ENCODE measurements at regions of chr6 and their contacts with region 1.

Region 1: GRCh38 chr6:26596579-26597388 is at the start of gene ABT1:
- DNase-seq: peak; percentile 98
- H3K4me3 ChIP-seq: peak within 1 kb of the TSS; percentile 61 to 99 (median 89)
- H3K27ac ChIP-seq: peak within 1 kb of the TSS; percentile 68
- H3K4me1 ChIP-seq: peaks cover 19% of the 10 kb centered on the region
- H3K27me3 ChIP-seq: no peaks in the 10 kb centered on the region
- CTCF ChIP-seq: no peak
- total RNA-seq, gene ABT1: 14.2 to 15.9 TPM

Region 2: DNA sequence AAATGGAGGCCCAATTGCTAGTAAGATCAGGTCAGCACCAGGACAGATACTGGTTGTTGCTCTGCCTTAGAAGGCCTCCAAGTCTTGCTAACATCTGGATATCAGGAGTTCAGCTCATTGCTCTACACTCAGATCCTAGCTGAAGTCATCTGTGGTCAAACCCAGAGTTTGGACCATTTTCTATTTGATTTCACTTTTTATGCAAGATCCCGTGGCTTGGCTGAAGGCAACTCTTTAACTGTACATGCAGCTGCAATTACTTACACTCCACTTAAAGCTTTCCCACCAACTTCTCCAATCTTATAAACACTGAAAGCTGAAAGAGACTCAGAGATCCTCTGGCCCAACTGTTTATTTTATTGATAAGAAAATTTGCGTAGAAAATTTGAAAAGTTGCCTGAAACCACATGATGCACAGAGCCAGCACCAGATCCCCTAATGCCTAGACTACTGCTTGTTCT is 669.0 kb before region 1 on chr6:
- CTCF ChIA-PET with region 1: no interaction called
- dilution Hi-C with region 1: no loop called
- in situ Hi-C with region 1: no loop called
- intact Hi-C with region 1: no loop called
- DNase-seq: no peak
- H3K4me3 ChIP-seq: no peak overlapping the region
- H3K27ac ChIP-seq: no peak overlapping the region
- H3K4me1 ChIP-seq: no peaks in the 10 kb centered on the region
- H3K27me3 ChIP-seq: peaks cover 2% of the 10 kb centered on the region
- CTCF ChIP-seq: no peak

Region 3: GRCh38 chr6:26568601-26569432 is 28.0 kb before region 1 on chr6:
- CTCF ChIA-PET with region 1: interaction called, 44 read pairs
- dilution Hi-C with region 1: no loop called
- in situ Hi-C with region 1: no loop called
- intact Hi-C with region 1: loop called (anchors 1 kb)
- DNase-seq: peak; percentile 85
- H3K4me3 ChIP-seq: peak overlapping the region; percentile 62 to 73 (median 71)
- H3K27ac ChIP-seq: no peak overlapping the region
- H3K4me1 ChIP-seq: no peaks in the 10 kb centered on the region
- H3K27me3 ChIP-seq: no peaks in the 10 kb centered on the region
- CTCF ChIP-seq: peak in 1 of 2 donors; percentile 27

Region 4: DNA sequence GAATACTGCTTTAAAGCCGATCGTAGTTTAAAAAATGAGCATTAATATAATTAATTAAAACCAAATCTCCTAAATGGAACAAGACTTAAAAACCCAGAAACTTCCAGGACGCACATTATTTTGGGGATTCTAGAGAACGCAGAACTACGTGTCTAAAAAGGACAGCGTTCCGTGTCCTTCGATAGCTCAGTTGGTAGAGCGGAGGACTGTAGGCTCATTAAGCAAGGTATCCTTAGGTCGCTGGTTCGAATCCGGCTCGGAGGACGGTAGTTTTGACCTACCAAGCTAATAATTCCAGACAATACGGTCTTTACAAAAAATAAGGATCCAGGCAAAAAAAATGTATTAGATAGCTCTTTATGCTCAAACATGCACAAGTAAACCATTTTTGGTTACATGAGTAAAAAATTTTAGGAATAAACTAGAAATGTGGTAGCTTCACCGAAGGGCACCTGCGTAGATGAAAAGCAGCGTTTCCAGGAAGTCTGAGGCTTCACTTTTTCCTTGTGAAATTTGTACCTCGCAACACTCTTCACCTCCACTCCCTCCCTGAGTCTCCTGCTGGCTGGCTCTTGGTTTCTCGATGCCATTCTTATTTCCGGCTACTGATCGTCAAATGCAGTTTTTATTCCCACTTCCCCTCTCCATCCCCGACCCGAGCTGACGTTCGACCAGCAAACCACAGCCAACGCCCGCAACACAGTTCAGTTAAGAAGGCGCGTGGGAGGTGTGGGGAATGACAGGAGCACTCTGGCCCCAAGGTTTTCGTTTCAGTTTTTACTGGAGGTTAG is 19.7 kb before region 1 on chr6:
- CTCF ChIA-PET with region 1: interaction called, 44 read pairs
- dilution Hi-C with region 1: no loop called
- in situ Hi-C with region 1: no loop called
- intact Hi-C with region 1: loop called (anchors 1 kb)
- DNase-seq: peak; percentile 78
- H3K4me3 ChIP-seq: peak overlapping the region; percentile 51 to 52 (median 51)
- H3K27ac ChIP-seq: no peak overlapping the region
- H3K4me1 ChIP-seq: peaks cover 5% of the 10 kb centered on the region
- H3K27me3 ChIP-seq: no peaks in the 10 kb centered on the region
- CTCF ChIP-seq: no peak

Measured in mammary epithelial cell (primary cell).